GM10248 (cell line): ENCODE measurements at regions of chr5 and their contacts with region 1.

Region 1: GRCh38 chr5:151740336-151740942 is 18.0 kb downstream of the ATOX1 start:
- DNase-seq: peak; percentile 76
- CTCF ChIP-seq: peak; percentile 79

Region 2: DNA sequence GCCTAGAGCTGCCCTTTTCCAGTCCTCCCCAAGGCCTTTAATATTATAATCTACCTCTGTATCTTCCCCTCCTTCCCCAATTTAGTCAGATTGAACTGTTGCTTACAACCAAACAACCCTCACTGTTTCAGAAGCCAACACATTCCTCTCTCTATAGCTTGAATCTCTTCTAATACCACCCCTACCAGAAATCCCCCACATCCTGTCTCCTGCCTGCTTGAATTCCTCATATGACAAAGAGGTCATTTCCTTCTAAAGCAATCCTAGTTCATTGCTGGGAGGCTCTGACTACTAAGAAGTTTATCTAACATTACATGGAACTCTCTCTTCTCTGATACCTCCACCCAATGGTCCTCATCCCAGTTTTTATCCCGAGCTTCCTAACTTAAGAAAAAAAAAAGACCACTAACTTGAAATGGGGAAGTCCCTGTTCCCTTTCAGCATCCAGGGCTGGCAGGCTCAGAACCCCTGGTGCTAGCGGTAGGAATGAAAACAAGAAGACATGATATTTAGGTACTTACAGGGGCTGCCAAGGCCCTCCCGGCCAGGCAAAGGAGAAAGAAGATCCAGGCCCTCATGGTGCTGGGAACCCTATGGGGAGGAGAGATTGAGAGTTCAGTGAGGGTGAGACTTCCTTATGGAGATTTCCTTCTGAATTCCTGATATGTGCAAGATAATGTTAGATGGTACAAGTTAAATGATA is 64.7 kb before region 1 on chr5:
- CTCF ChIA-PET with region 1: interaction called, 30 read pairs
- POLR2A ChIA-PET with region 1: no interaction called
- DNase-seq: no peak
- CTCF ChIP-seq: no peak

Region 3: GRCh38 chr5:151699071-151699901 is 41.2 kb before region 1 on chr5:
- CTCF ChIA-PET with region 1: interaction called, 15 read pairs
- POLR2A ChIA-PET with region 1: no interaction called
- DNase-seq: no peak
- CTCF ChIP-seq: no peak

Region 4: DNA sequence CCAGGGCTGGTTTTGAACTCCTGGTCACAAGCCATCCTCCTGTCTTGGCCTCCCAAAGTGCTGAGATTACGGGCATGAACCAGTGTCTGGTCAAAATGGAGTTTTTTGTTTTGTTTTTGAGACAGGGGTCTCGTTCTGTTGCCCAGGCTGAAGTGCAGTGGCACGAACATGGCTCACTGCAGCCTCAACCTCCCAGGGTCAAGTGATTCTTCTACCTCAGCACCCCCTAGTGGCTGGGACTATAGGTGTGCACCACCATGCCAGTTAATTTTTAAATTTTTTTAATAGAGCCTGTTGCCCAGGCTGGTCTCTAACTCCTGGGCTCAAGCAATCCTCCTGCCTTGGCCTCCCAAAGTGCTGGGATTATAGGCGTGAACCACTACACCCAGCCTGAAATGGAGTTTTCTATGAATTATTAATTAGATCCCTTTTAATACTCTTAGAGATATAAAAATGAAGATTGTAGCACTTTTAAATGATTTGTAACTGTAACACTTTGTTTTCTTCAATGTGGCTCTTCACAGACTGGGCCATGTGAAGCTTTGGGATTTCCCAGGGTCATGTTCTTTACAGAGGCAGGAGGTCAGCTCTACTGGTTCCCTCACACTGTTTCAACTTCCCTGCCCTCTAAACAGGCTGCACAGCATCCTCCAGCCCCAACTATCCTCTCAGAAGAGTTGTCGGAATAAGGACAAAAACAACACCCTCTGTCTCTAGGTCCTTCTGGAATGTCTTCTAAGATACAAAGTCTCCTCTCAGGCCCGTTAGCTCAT is 21.0 kb before region 1 on chr5:
- CTCF ChIA-PET with region 1: interaction called, 147 read pairs
- POLR2A ChIA-PET with region 1: no interaction called
- DNase-seq: no peak
- CTCF ChIP-seq: peak; percentile 40

Region 5: DNA sequence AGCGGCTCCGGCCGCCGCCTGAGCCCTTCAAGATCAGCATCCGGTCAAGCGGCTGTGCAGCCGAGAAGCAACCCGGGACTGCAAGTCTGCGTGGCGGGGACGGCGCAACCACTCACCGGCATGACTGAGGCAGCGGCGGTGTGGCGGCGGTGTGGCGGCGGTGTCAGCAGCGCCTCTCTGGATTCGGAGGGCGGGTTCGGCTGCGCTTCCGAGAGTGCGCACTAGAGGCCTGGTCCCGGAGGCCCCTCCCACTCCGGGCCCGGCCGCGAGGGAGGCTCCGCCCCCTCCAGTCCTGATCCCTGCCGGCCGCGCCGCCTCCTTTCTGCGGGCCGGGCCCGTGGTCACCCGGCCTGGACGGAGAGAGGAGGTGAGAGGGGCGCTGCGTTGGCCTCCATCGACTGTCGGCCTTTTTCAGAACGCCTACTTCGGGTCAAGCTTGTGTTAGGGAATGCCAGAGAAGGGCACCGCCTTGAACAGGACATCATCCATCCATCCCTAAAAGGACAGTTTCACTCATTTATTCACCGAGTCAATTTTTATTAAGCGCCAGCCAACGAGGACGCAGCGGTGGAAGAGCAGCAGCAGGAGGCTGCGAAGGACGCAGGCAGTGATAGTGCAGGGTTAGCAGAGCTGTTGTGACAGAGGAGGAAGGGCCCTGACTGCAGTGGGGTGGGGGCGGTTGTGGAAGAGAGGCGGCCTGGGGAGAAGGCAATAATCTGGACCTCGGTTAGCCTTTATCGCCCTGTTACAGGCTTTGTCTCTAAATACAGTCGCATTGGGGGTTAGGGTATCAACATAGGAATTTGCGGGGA is 18.2 kb after region 1 on chr5 and contains the start of gene ATOX1:
- CTCF ChIA-PET with region 1: interaction called, 86 read pairs
- POLR2A ChIA-PET with region 1: interaction called, 3 read pairs
- DNase-seq: peak; percentile 99
- CTCF ChIP-seq: no peak

Region 6: GRCh38 chr5:151771259-151772028 is 31.0 kb after region 1 on chr5 and contains the start of gene G3BP1:
- CTCF ChIA-PET with region 1: interaction called, 28 read pairs
- POLR2A ChIA-PET with region 1: interaction called, 3 read pairs
- DNase-seq: peak; percentile 97
- CTCF ChIP-seq: peak; percentile 68

Region 7: GRCh38 chr5:151793358-151793757 is 52.9 kb after region 1 on chr5:
- CTCF ChIA-PET with region 1: no interaction called
- POLR2A ChIA-PET with region 1: no interaction called
- DNase-seq: no peak
- CTCF ChIP-seq: no peak

Region 8: DNA sequence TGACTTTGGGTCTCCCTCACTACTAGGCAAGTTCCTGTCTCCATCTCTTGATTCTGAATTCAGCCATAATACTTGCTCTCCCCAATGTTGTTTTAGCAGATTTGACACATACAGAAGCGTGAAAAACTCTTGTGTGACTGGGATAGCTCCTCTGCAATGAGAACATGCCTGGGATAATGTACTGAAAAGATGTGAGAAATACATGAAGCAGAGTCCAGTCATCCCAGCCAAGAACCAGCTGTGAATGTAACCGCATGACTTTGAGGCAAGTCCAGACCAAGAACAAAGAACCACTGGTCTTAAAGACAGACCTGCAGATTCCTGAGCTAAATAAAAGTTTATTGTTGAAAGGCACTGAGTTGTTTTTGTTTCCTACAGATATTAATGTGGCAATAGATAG is 529.7 kb after region 1 on chr5:
- CTCF ChIA-PET with region 1: no interaction called
- POLR2A ChIA-PET with region 1: no interaction called
- DNase-seq: no peak
- CTCF ChIP-seq: no peak